ENCODE measurements at regions of chr11 and their contacts with region 1.

Region 1: DNA sequence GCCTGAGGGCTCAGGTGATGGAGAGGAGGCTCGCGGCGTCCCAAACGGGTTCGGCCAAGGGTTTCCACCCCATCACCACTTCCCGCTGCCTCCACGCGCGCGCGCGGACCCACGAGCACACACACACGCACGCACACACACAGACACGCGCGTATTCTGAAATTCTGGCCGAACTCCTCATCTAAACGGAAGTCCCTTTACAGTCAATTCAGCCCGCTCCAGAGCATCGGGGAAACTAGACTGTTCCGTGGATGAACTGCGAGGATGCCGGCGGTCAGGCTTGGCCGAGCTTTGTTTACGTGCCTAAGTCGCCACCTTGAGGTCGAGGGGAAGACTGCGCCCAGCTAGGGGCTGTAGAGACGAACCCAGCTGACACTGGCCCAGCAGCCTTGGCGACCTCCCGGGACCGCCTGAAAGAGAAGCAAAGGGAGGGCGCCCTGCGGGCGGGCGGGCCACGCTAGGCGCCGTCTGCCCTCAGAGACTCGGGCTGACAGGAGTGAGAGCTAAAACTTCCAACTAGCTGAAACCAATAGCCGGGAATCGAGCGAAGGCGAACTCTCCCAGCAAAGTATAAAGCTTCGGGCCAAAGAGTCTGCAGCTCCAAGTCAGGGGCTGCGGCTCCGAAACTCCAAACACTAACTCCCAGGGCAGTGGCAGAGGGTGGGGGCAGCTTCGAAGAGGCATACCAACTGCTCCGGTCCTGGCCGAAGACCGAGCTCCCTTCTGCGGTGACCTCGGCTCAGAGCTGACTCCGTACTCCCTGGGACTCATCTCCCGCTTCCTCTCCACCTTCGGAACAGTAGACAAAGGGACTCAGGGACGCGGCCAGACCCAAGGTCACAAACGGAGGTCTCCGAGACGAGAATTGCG is 124.7 kb upstream of the C11orf58 start:
- DNase-seq: peak; percentile 86
- CTCF ChIP-seq: peak; percentile 95

Region 2: GRCh38 chr11:15769203-15769602 is 844.5 kb before region 1 on chr11:
- CTCF ChIA-PET with region 1: interaction called, 11 read pairs
- POLR2A ChIA-PET with region 1: no interaction called
- DNase-seq: no peak
- CTCF ChIP-seq: no peak

Region 3: DNA sequence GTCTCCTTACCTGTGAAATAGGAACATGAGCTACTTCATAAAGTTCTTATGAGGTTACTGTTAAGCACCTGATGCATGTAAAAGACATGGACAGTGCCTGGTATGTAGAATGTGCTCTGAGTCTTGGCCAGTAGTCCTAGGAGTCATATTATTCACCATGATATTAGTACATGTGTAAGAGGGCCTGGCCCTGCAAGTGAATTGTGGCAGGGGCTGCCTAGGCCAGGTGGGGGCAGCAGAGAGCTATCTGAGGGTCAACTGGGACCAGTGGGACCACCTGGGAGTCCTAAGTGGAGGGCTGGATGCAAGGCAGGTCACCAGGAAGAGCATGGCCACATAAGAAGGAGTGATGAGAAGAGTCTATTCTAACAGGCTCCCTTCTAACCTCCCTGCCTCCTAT is 786.9 kb before region 1 on chr11:
- CTCF ChIA-PET with region 1: interaction called, 13 read pairs
- POLR2A ChIA-PET with region 1: no interaction called
- DNase-seq: peak; percentile 21
- CTCF ChIP-seq: peak; percentile 55

Region 4: GRCh38 chr11:16191212-16191867 is 422.4 kb before region 1 on chr11:
- CTCF ChIA-PET with region 1: interaction called, 11 read pairs
- POLR2A ChIA-PET with region 1: no interaction called
- DNase-seq: peak; percentile 10
- CTCF ChIP-seq: no peak

Region 5: GRCh38 chr11:16632295-16633200 is 18.8 kb after region 1 on chr11:
- CTCF ChIA-PET with region 1: interaction called, 12 read pairs
- POLR2A ChIA-PET with region 1: no interaction called
- DNase-seq: no peak
- CTCF ChIP-seq: peak; percentile 32

Region 6: DNA sequence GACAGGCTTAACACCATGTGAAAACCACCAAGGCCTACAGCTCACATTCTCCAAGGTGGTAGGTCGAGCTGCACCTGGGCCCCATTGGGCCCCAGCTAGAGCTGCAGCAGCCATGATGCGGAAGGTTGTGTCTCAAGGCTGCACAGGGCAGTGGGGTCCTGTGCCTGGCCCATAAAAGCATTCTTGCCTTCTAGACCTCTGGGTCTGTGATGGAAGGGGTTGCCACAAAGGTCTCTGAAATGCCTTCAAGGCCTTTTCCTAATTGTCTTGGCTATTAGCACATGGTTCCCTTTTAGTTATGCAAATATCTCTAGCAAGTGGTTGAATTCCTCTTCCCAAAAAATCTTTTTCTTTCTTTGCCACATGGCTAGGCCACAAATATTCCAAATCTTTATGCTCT is 72.2 kb after region 1 on chr11:
- CTCF ChIA-PET with region 1: no interaction called
- POLR2A ChIA-PET with region 1: no interaction called
- DNase-seq: no peak
- CTCF ChIP-seq: no peak

Measured in GM10248 (cell line).